Posterior vena cava (tissue), 2 donors: ENCODE measurements at regions of chrX and their contacts with region 1.

Region 1: GRCh38 chrX:147485207-147485606 is 426.5 kb upstream of the FMR1 start:
- DNase-seq: peak; percentile 76

Region 2: GRCh38 chrX:147602176-147602696 is 117.0 kb after region 1 on chrX:
- intact Hi-C with region 1: loop called in 1 of 2 experiments (anchors 5 kb)
- DNase-seq: no peak